ENCODE measurements at regions of chr4 and their contacts with region 1.

Region 1: GRCh38 chr4:109599046-109599652 is 39.1 kb downstream of the MCUB start:
- DNase-seq: peak in 3 of 9 donors; percentile 13 to 19 (median 17)
- ATAC-seq: peak; percentile 45
- H3K4me3 ChIP-seq: no peak overlapping the region
- H3K4me3 Mint-ChIP-seq: peak overlapping the region in 7 of 10 donors; percentile 47 to 70 (median 60)
- H3K27ac ChIP-seq: peak overlapping the region; percentile 60
- H3K27ac Mint-ChIP-seq: peak overlapping the region in 8 of 9 donors; percentile 18 to 92 (median 77)
- H3K4me1 ChIP-seq: peaks cover 0 to 10% of the 10 kb centered on the region in 2 donors
- H3K4me1 Mint-ChIP-seq: peaks cover 17 to 61% (median 53%) of the 10 kb centered on the region in 7 donors
- H3K27me3 ChIP-seq: no peaks in the 10 kb centered on the region
- H3K27me3 Mint-ChIP-seq: no peaks in the 10 kb centered on the region

Region 2: DNA sequence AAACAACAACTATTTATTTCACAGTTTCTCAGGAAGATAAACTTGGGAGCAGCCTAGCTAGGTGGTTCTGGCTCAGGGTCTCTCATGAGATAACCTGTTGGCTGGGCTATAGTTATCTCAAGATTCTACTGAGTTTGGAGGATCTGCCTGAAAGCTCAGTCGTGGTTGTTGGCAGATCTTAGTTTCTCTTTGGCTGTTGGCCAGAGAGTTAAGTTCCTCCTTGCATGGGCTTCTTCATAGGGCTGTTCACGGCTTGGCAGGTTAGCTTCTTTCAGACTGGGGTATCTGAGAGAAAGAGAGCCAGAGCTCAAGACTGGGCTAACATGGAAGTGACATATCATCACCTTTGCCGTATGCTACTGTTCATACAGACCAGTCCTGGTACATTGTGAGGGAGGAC is 136.9 kb before region 1 on chr4:
- CTCF ChIA-PET with region 1: no interaction called
- POLR2A ChIA-PET with region 1: no interaction called
- intact Hi-C with region 1: no loop called
- DNase-seq: no peak
- ATAC-seq: no peak
- H3K4me3 ChIP-seq: no peak overlapping the region
- H3K4me3 Mint-ChIP-seq: no peak overlapping the region
- H3K27ac ChIP-seq: peak overlapping the region; percentile 18
- H3K27ac Mint-ChIP-seq: peak overlapping the region in 2 of 9 donors; percentile 10 to 33
- H3K4me1 ChIP-seq: no peaks in the 10 kb centered on the region
- H3K4me1 Mint-ChIP-seq: peaks cover 3 to 74% (median 46%) of the 10 kb centered on the region in 7 donors
- H3K27me3 ChIP-seq: no peaks in the 10 kb centered on the region
- H3K27me3 Mint-ChIP-seq: no peaks in the 10 kb centered on the region

Region 3: GRCh38 chr4:109616243-109616642 is 17.1 kb after region 1 on chr4:
- CTCF ChIA-PET with region 1: no interaction called
- POLR2A ChIA-PET with region 1: interaction called, 5 read pairs
- intact Hi-C with region 1: loop called in 1 of 2 experiments (anchors 2 kb)
- DNase-seq: no peak
- ATAC-seq: no peak
- H3K4me3 ChIP-seq: no peak overlapping the region
- H3K4me3 Mint-ChIP-seq: peak overlapping the region in 4 of 10 donors; percentile 17 to 57 (median 25)
- H3K27ac ChIP-seq: no peak overlapping the region
- H3K27ac Mint-ChIP-seq: peak overlapping the region in 5 of 9 donors; percentile 5 to 75 (median 59)
- H3K4me1 ChIP-seq: no peaks in the 10 kb centered on the region
- H3K4me1 Mint-ChIP-seq: peaks cover 25 to 98% (median 85%) of the 10 kb centered on the region in 7 donors
- H3K27me3 ChIP-seq: no peaks in the 10 kb centered on the region
- H3K27me3 Mint-ChIP-seq: no peaks in the 10 kb centered on the region

Measured in naive thymus-derived CD4-positive, alpha-beta T cell (primary cell).